Heart left ventricle (tissue), 16 donors: ENCODE measurements at regions of chr7 and their contacts with region 1.

Region 1: DNA sequence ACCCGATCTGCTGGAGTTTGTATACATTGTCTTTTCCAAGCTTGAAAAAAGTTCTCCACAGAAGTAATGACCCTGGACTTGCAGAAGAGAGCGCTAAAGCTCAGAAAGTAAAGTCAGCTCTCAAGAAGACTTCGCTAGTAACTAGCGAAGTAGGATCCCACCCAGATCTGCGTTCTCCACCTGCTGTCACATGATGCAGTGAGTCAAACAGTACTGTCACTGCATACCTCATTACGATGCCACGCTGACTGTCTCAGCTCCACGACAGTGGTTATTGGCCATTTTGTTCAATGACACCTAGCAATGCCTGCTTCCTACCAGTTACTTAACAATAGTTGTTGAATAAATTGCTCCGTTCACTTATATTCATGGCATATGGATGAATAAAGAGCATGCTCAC is 29.7 kb upstream of the SEC61G start:
- DNase-seq: no peak
- ATAC-seq: peak; percentile 55 to 82 (median 76)
- H3K4me3 ChIP-seq: no peak overlapping the region
- H3K27ac ChIP-seq: no peak overlapping the region
- H3K4me1 ChIP-seq: peaks cover 0 to 8% (median 2%) of the 10 kb centered on the region in 12 donors
- H3K27me3 ChIP-seq: no peaks in the 10 kb centered on the region
- CTCF ChIP-seq: peak; percentile 52 to 81 (median 71)
- POLR2A ChIP-seq: no peak

Region 2: GRCh38 chr7:54839538-54840213 is 51.0 kb after region 1 on chr7:
- intact Hi-C with region 1: loop called in 9 of 10 experiments (anchors 1 to 5 kb)
- DNase-seq: peak; percentile 78 to 88 (median 86)
- ATAC-seq: peak; percentile 83 to 95 (median 92)
- H3K4me3 ChIP-seq: no peak overlapping the region
- H3K27ac ChIP-seq: peak overlapping the region in 1 of 12 donors; percentile 26
- H3K4me1 ChIP-seq: peaks cover 0 to 52% (median 23%) of the 10 kb centered on the region in 12 donors
- H3K27me3 ChIP-seq: no peaks in the 10 kb centered on the region
- CTCF ChIP-seq: peak; percentile 54 to 74 (median 68)
- POLR2A ChIP-seq: no peak